Calu3 (cell line): ENCODE measurements at regions of chr7 and their contacts with region 1.

Region 1: DNA sequence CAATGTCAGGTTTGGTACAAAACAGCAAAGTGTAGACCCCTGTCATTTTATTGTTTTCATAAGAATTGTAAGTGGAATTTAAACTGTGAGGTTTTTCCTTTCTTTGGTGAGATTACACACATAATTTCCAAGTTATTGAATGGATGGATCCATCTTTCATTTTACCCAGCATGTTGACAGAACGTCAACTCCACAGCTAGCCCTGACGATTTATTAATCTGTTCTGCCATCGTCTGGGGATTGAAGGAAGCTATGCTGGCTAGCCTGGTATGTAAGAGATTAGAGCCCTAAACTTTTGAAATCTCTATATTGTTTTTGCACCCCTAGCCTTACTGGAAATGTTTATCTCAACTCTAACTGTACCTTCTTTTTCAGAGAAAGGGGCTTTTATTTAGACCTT is 8.6 kb downstream of the WNT16 start:
- DNase-seq: peak; percentile 16
- H3K4me3 Mint-ChIP-seq: no peak overlapping the region
- H3K27ac Mint-ChIP-seq: no peak overlapping the region
- H3K4me1 Mint-ChIP-seq: no peaks in the 10 kb centered on the region
- H3K27me3 Mint-ChIP-seq: no peaks in the 10 kb centered on the region
- CTCF ChIP-seq: no peak

Region 2: GRCh38 chr7:120867932-120868331 is 469.5 kb before region 1 on chr7:
- CTCF ChIA-PET with region 1: no interaction called
- intact Hi-C with region 1: no loop called
- DNase-seq: no peak
- H3K4me3 Mint-ChIP-seq: no peak overlapping the region
- H3K27ac Mint-ChIP-seq: no peak overlapping the region
- H3K4me1 Mint-ChIP-seq: no peaks in the 10 kb centered on the region
- H3K27me3 Mint-ChIP-seq: no peaks in the 10 kb centered on the region
- CTCF ChIP-seq: no peak

Region 3: GRCh38 chr7:121126801-121127534 is 210.4 kb before region 1 on chr7:
- CTCF ChIA-PET with region 1: no interaction called
- intact Hi-C with region 1: loop called (anchors 2 kb)
- DNase-seq: no peak
- H3K4me3 Mint-ChIP-seq: no peak overlapping the region
- H3K27ac Mint-ChIP-seq: no peak overlapping the region
- H3K4me1 Mint-ChIP-seq: no peaks in the 10 kb centered on the region
- H3K27me3 Mint-ChIP-seq: no peaks in the 10 kb centered on the region
- CTCF ChIP-seq: no peak